ENCODE measurements at regions of chr3 and their contacts with region 1.

Region 1: GRCh38 chr3:58332575-58333188 is at the start of gene PXK:
- DNase-seq: peak; percentile 77
- H3K4me3 Mint-ChIP-seq: peak within 1 kb of the TSS; percentile 100
- H3K27ac Mint-ChIP-seq: peak within 1 kb of the TSS; percentile 91
- H3K4me1 Mint-ChIP-seq: peaks cover 28% of the 10 kb centered on the region
- H3K27me3 Mint-ChIP-seq: no peaks in the 10 kb centered on the region
- total RNA-seq, gene PXK: 44.7 to 46.1 TPM

Region 2: GRCh38 chr3:57872606-57873005 is 460.1 kb before region 1 on chr3:
- CTCF ChIA-PET with region 1: no interaction called
- intact Hi-C with region 1: no loop called
- DNase-seq: no peak
- H3K4me3 Mint-ChIP-seq: no peak overlapping the region
- H3K27ac Mint-ChIP-seq: no peak overlapping the region
- H3K4me1 Mint-ChIP-seq: no peaks in the 10 kb centered on the region
- H3K27me3 Mint-ChIP-seq: no peaks in the 10 kb centered on the region

Region 3: GRCh38 chr3:58346368-58346767 is 13.7 kb after region 1 on chr3:
- CTCF ChIA-PET with region 1: interaction called, 6 read pairs
- intact Hi-C with region 1: loop called (anchors 2 kb)
- DNase-seq: no peak
- H3K4me3 Mint-ChIP-seq: no peak overlapping the region
- H3K27ac Mint-ChIP-seq: peak overlapping the region; percentile 3
- H3K4me1 Mint-ChIP-seq: peaks cover 28% of the 10 kb centered on the region
- H3K27me3 Mint-ChIP-seq: no peaks in the 10 kb centered on the region

Region 4: DNA sequence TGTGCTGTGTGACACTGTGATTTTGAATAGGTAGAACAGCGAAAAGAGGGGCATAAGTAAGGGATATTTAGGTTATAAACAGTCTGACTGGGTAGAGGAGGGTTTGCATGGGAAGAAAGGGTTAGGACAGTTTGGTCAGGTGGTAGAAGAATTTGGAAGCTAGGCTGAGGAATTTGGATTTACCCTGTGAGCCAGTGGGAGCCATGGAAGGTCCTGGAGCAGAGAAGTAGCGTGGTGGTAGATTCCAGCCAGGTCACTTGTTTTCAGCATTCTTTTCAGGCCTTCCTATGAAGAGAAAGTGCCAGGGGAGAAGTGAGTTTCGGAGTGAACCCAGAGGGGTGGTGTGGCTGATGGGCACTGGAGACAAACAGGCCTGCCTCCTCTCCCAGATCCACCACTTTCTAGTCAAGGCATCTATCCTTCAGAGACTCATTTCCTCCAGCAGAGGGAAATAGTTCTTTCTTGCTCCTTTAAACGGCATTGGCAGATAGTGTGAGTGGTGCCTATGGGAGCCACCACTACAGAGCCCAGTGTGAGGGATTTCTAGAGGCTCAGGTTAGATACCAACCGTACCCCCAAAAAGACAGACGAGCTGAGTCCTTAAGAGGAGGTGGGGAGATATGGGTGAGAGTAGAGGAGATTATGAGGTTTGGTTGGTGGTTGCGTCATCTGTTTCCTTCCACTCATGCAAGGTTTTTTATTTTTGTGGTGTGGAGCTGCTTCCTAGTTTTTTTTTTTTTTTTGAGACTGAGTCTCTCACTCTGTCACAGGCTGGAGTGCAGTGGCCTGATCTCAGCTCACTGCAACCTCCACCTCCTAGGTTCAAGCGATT is 21.3 kb after region 1 on chr3:
- CTCF ChIA-PET with region 1: interaction called, 4 read pairs
- intact Hi-C with region 1: loop called (anchors 1 kb)
- DNase-seq: peak; percentile 53
- H3K4me3 Mint-ChIP-seq: peak overlapping the region; percentile 60
- H3K27ac Mint-ChIP-seq: peak overlapping the region; percentile 87
- H3K4me1 Mint-ChIP-seq: peaks cover 41% of the 10 kb centered on the region
- H3K27me3 Mint-ChIP-seq: no peaks in the 10 kb centered on the region

Region 5: DNA sequence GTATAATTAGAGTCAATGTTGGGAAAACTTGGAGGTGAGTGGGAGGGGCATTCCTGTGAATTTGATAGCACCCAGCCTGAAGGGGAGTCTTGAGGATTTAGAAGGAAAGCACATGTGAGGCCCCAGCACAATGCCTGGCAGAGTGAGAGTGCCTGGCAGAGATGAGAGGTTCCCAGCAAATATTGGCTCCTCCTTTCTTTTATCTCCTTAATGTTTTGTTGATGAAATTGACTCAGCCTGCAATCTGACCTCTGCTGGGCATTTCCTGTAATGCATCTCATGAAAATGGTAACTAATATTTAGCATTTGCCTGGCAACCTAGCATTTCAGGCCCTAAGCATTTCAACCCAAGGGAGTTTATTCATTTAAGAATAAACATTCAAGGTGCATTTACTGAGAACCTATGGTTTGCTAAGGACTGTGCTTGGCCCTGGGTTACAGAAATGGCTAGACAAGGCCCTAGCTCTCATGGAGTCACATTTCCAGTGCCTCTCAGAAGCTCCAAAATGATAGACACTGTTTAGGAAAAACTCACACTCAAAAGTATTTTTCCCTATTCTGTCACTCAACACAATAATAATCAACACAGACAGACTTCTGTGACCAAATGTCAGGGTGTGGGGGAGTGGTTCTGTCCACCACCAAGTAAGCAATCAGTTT is 82.0 kb after region 1 on chr3:
- CTCF ChIA-PET with region 1: interaction called, 7 read pairs
- intact Hi-C with region 1: loop called (anchors 1 kb)
- DNase-seq: peak; percentile 68
- H3K4me3 Mint-ChIP-seq: no peak overlapping the region
- H3K27ac Mint-ChIP-seq: no peak overlapping the region
- H3K4me1 Mint-ChIP-seq: peaks cover 6% of the 10 kb centered on the region
- H3K27me3 Mint-ChIP-seq: no peaks in the 10 kb centered on the region

Region 6: GRCh38 chr3:58433400-58434169 is 100.9 kb after region 1 on chr3 and contains the start of gene PDHB:
- CTCF ChIA-PET with region 1: interaction called, 3 read pairs
- intact Hi-C with region 1: loop called (anchors 2 kb)
- DNase-seq: peak; percentile 89
- H3K4me3 Mint-ChIP-seq: peak within 1 kb of the TSS; percentile 91
- H3K27ac Mint-ChIP-seq: peak within 1 kb of the TSS; percentile 92
- H3K4me1 Mint-ChIP-seq: peaks cover 20% of the 10 kb centered on the region
- H3K27me3 Mint-ChIP-seq: no peaks in the 10 kb centered on the region
- total RNA-seq, gene PDHB: 51.6 to 53.7 TPM

Region 7: DNA sequence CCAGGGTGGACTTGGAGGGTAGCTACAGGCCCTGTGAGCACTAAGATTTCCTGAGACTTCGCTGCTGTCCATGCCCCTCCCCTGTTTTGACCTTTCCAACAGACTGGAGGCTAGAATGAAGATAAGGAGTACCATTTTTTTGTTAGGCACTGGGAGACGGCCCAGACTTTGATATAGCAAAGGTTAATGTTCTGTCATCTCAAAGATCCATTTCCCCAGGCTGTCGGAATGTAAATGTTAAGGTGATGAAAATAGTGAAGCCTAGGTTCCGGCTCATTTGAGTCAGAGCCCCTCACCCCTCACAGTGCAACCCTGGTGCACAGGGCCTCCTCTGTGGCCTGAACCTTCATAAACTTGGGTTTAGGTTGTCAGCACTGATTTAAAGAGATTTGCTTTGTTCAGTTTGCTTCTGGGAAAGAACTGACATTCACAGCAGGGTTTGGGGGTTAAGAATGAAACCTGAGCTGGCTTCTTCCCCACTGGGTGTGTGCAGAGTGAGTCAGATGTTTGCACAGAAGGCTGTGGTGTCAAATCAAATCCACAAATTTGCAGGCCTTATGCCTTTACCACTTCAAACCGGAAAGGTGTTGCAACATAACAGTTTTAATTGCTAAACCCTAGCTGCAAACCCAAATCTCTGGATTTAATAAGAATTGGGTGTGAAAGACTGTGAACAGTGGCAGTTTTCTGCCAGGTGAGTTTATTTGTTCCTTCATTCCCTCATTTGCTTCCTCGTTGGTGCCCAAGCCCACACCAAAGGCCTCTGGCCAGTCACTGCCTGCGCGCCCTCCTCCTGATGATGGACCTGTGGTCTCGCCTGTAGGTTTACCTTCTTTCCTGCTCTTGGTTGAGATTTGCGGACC is 138.6 kb after region 1 on chr3:
- CTCF ChIA-PET with region 1: no interaction called
- intact Hi-C with region 1: loop called (anchors 1 kb)
- DNase-seq: peak; percentile 81
- H3K4me3 Mint-ChIP-seq: no peak overlapping the region
- H3K27ac Mint-ChIP-seq: peak overlapping the region; percentile 86
- H3K4me1 Mint-ChIP-seq: peaks cover 20% of the 10 kb centered on the region
- H3K27me3 Mint-ChIP-seq: no peaks in the 10 kb centered on the region

Region 8: GRCh38 chr3:59235634-59236012 is 902.9 kb after region 1 on chr3:
- CTCF ChIA-PET with region 1: no interaction called
- intact Hi-C with region 1: no loop called
- DNase-seq: peak; percentile 74
- H3K4me3 Mint-ChIP-seq: no peak overlapping the region
- H3K27ac Mint-ChIP-seq: no peak overlapping the region
- H3K4me1 Mint-ChIP-seq: peaks cover 8% of the 10 kb centered on the region
- H3K27me3 Mint-ChIP-seq: no peaks in the 10 kb centered on the region